MCF 10A (cell line): ENCODE measurements at regions of chrX and their contacts with region 1.

Region 1: GRCh38 chrX:139759637-139760036 is 51.7 kb upstream of the MCF2 start:
- DNase-seq: peak; percentile 40
- H3K4me3 Mint-ChIP-seq: no peak overlapping the region
- H3K27ac Mint-ChIP-seq: no peak overlapping the region
- H3K4me1 Mint-ChIP-seq: no peaks in the 10 kb centered on the region
- H3K27me3 Mint-ChIP-seq: no peaks in the 10 kb centered on the region
- CTCF ChIP-seq: peak; percentile 50

Region 2: DNA sequence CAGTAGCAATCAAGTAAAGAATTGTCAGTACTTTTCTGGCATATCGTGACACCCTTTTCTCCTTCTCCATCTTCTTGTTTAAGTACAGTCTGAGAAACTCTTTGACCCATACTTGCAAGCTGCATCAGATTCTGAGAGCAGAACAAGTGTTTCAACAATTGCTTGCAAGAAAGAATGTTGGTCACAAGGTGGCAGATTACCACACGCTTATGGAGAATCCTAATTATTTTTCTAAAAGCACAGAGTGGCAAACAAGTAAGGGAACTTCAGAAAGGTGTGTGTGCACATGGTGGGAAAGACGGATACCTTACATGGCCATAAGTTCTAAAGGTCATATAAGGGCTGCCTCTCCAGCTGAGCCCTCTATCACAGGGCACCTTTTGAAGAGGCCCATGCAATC is 911.7 kb before region 1 on chrX:
- CTCF ChIA-PET with region 1: interaction called, 3 read pairs
- POLR2A ChIA-PET with region 1: no interaction called
- intact Hi-C with region 1: loop called (anchors 10 kb)
- DNase-seq: peak; percentile 31
- H3K4me3 Mint-ChIP-seq: no peak overlapping the region
- H3K27ac Mint-ChIP-seq: no peak overlapping the region
- H3K4me1 Mint-ChIP-seq: no peaks in the 10 kb centered on the region
- H3K27me3 Mint-ChIP-seq: no peaks in the 10 kb centered on the region
- CTCF ChIP-seq: peak; percentile 34

Region 3: GRCh38 chrX:139642241-139642927 is 117.3 kb before region 1 on chrX:
- CTCF ChIA-PET with region 1: interaction called, 5 read pairs
- POLR2A ChIA-PET with region 1: no interaction called
- intact Hi-C with region 1: loop called (anchors 5 kb)
- DNase-seq: peak; percentile 15
- H3K4me3 Mint-ChIP-seq: peak overlapping the region; percentile 74
- H3K27ac Mint-ChIP-seq: peak overlapping the region; percentile 23
- H3K4me1 Mint-ChIP-seq: peaks cover 15% of the 10 kb centered on the region
- H3K27me3 Mint-ChIP-seq: no peaks in the 10 kb centered on the region
- CTCF ChIP-seq: no peak